Right lobe of liver (tissue), 6 donors: ENCODE measurements at regions of chrX and their contacts with region 1.

Region 1: DNA sequence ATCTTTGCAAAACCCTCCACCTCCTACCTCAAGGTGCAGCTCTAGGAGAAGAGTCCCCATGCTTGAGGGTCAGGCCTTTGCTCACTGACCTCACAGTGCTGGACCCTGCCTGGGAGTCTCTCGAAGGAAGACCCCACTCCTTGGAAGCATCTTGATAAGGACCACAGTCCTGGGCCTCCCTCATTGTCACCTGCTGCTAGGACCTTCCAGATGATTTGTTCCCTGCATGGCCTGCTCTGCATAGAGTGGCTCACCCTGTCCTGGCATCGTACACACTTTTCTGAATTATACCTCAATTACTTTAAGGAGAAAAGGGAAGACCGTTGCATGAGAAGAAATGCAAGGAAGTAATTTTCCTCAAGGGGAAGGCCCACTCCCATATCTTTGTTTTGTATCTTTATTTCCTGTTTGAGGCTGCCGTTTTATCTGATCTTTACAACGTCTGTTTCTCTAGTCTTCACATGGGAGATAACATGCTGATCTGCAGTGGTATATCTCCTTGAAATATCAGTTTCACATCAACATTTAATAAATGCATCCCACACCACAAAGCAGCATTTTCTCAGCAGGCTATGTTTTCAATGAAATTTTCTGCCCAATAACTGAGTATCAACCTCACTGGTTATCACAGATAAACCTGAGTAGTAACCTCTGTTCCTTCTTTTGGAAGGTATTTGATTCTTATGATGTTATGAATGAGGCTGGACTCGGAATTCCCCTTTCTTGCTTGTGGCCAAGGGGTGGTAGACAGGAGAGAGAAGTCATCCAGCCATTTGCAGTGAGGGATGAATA is 15.0 kb upstream of the AKAP17A start:
- DNase-seq: peak in 1 of 3 donors; percentile 4
- ATAC-seq: no peak
- H3K4me3 ChIP-seq: no peak overlapping the region
- H3K27ac ChIP-seq: no peak overlapping the region
- H3K4me1 ChIP-seq: no peaks in the 10 kb centered on the region
- H3K27me3 ChIP-seq: no peaks in the 10 kb centered on the region
- CTCF ChIP-seq: no peak
- POLR2A ChIP-seq: no peak

Region 2: DNA sequence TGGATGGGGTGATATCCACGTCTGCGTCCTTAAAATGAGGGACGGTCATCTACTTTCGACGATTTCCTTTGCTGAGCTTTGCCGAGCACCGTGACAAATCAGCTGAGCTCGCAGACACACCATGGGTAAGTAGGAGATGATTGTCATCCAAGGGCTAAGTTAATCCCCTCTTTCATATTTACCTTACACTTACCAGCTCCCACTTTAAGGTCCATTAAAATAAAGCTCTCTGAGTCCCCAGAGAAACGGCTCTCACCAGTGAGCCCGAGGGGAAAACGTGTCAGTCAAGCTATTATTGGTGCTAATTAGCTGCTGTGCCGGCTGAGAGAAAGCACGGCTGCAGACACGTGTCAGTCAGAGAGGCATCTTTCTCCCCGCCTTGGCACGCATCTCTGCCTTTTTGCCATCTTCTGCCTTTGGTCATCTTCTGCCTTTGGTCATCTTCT is 436.1 kb before region 1 on chrX:
- intact Hi-C with region 1: no loop called
- DNase-seq: peak in 1 of 3 donors; percentile 11
- ATAC-seq: no peak
- H3K4me3 ChIP-seq: no peak overlapping the region
- H3K27ac ChIP-seq: no peak overlapping the region
- H3K4me1 ChIP-seq: no peaks in the 10 kb centered on the region
- H3K27me3 ChIP-seq: no peaks in the 10 kb centered on the region
- CTCF ChIP-seq: no peak
- POLR2A ChIP-seq: no peak

Region 3: GRCh38 chrX:1453951-1454785 is 122.2 kb before region 1 on chrX:
- intact Hi-C with region 1: loop called (anchors 5 to 10 kb)
- DNase-seq: peak; percentile 90
- ATAC-seq: peak; percentile 50 to 55 (median 54)
- H3K4me3 ChIP-seq: peak overlapping the region; percentile 26 to 52 (median 38)
- H3K27ac ChIP-seq: peak overlapping the region in 1 of 3 donors; percentile 43
- H3K4me1 ChIP-seq: no peaks in the 10 kb centered on the region
- H3K27me3 ChIP-seq: no peaks in the 10 kb centered on the region
- CTCF ChIP-seq: peak; percentile 96 to 98 (median 98)
- POLR2A ChIP-seq: no peak

Region 4: GRCh38 chrX:1618689-1619088 is 42.3 kb after region 1 on chrX:
- intact Hi-C with region 1: no loop called
- DNase-seq: no peak
- ATAC-seq: no peak
- H3K4me3 ChIP-seq: no peak overlapping the region
- H3K27ac ChIP-seq: no peak overlapping the region
- H3K4me1 ChIP-seq: no peaks in the 10 kb centered on the region
- H3K27me3 ChIP-seq: no peaks in the 10 kb centered on the region
- CTCF ChIP-seq: no peak
- POLR2A ChIP-seq: no peak

Region 5: DNA sequence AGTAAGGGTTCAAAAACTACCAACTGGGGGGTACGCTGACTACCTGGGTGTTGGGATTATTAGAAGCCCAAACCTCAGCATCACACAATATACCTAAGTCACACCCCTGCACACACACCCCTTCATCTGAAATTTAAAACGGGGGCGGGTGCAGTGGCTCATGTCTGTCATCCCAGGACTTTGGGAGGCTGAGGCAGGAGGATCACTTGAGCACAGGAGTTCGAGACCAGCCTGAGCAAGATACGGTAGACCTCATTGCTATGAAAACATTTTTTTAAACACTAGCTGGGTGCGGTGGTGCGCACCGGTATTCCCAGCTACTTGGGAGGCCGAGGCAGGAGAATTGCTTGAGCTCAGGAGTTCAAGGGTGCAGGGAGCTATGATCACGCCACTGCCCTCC is 369.5 kb after region 1 on chrX:
- intact Hi-C with region 1: no loop called
- DNase-seq: no peak
- ATAC-seq: no peak
- H3K4me3 ChIP-seq: no peak overlapping the region
- H3K27ac ChIP-seq: no peak overlapping the region
- H3K4me1 ChIP-seq: no peaks in the 10 kb centered on the region
- H3K27me3 ChIP-seq: no peaks in the 10 kb centered on the region
- CTCF ChIP-seq: no peak
- POLR2A ChIP-seq: no peak